ENCODE measurements at regions of chr16 and their contacts with region 1.

Region 1: DNA sequence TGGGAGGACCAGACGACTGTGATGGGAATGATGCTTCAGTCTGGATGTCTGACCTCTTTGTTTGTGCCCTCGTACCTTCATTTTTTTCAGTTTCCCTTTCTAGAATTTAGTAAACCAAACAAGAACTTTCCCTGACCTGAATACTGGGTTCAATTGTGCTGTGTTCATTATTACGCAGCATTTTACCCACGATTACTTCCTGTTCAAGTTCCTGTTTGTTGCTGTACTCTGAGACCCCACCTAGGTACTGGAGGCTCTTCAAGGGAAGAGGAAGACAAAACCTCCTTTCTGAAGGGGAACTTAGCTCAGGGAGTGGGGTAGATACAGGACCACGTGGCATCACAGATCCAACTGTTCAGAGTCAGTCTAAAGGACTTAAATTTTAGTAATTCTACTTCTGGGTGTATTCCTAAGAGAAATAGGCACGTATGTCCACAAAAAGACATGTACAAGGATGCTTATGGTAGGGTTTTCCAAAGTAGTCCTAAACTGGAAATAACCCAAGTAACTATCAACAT is 9.2 kb upstream of the PRKCB start:
- DNase-seq: no peak
- H3K4me3 ChIP-seq: no peak overlapping the region
- H3K27ac ChIP-seq: no peak overlapping the region
- H3K4me1 ChIP-seq: peaks cover 0 to 14% (median 4%) of the 10 kb centered on the region in 4 donors
- H3K27me3 ChIP-seq: no peaks in the 10 kb centered on the region
- CTCF ChIP-seq: no peak
- EP300 ChIP-seq: no peak
- POLR2A ChIP-seq: no peak

Region 2: GRCh38 chr16:23408823-23409298 is 417.7 kb before region 1 on chr16:
- in situ Hi-C with region 1: no loop called
- intact Hi-C with region 1: no loop called
- DNase-seq: peak; percentile 64
- H3K4me3 ChIP-seq: no peak overlapping the region
- H3K27ac ChIP-seq: peak overlapping the region; percentile 52 to 71 (median 60)
- H3K4me1 ChIP-seq: peaks cover 0 to 27% (median 10%) of the 10 kb centered on the region in 4 donors
- H3K27me3 ChIP-seq: no peaks in the 10 kb centered on the region
- CTCF ChIP-seq: no peak
- EP300 ChIP-seq: no peak
- POLR2A ChIP-seq: no peak

Region 3: DNA sequence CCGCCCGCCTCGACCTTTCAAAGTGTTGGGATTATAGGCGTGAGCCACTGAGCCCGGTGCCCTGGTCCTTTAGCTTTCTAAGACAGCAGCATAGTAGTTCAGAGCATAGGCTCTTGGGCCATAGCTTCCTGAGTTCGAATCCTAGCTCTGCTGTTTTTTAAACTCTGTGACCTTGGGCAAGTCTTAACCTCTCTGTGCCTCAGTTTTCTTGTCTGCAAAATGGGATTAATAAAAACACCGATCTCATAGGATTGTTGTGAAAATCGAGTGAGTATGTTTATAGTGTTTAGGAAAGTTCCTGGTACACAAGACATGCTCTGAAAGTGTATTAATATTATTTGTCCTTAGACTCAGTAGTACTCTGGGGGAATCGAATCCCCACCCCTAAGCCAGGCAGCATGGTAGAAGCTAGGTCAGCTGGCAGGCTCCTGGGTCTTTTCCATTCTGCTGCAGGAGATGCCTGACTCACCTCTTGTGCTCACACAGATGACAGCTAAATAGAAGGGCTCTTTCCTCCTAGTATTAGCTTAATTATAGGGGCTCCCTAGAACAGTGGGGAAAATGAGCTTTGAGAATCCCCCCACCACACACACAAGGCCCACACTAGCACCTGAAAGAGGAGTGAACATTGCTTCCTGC is 53.3 kb after region 1 on chr16:
- in situ Hi-C with region 1: loop called in 1 of 4 experiments (anchors 10 kb)
- intact Hi-C with region 1: no loop called
- DNase-seq: no peak
- H3K4me3 ChIP-seq: no peak overlapping the region
- H3K27ac ChIP-seq: peak overlapping the region in 1 of 4 donors; percentile 48
- H3K4me1 ChIP-seq: no peaks in the 10 kb centered on the region
- H3K27me3 ChIP-seq: no peaks in the 10 kb centered on the region
- CTCF ChIP-seq: no peak
- EP300 ChIP-seq: no peak
- POLR2A ChIP-seq: no peak

Measured in transverse colon (tissue), 4 donors.